ENCODE measurements at regions of chr12 and their contacts with region 1.

Region 1: DNA sequence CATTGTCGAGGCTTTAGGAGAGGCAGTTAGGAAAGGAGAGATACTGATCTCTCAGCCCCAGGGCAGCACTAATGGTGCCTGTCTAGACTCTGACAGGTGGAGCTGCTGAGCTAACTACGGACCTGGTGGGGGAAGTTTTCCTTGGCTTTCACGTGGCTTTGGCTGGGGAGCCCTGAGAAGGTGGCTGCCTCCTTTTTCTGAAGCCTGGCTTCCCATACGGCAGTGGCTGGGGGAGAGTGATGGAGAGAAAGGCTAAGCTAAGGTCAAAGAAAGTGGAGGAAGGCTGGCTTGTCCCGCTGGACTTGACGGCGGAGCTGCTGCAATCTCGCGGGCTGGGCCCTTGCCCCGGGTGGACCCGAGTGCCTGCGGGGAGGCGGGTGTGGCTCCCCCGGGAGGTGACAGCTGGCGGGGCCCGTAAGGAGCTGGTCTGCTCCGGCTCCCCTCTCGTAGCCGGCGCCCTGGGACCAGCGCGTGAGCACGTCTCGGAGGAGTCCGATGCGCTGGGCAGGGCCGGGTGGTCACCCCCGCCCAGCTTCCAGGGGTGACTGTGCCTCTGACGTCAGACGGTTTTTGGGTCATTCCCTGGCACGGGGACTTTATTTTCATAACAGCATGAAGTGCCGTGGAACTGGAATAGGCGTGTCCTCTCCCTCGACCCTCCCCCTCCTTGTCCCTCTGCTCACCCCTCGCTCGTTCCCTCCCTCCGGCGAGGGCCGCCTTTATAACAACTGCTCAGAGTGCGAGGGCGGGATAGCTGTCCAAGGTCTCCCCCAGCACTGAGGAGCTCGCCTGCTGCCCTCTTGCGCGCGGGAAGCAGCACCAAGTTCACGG is at the start of gene GPRC5A:
- DNase-seq: peak; percentile 95 to 98
- H3K4me3 ChIP-seq: peak within 1 kb of the TSS; percentile 56 to 67
- H3K27ac ChIP-seq: peak within 1 kb of the TSS; percentile 94 to 96
- H3K4me1 ChIP-seq: peaks cover 0 to 34% (median 9%) of the 10 kb centered on the region in 4 donors
- H3K27me3 ChIP-seq: no peaks in the 10 kb centered on the region
- CTCF ChIP-seq: peak; percentile 13 to 17

Region 2: DNA sequence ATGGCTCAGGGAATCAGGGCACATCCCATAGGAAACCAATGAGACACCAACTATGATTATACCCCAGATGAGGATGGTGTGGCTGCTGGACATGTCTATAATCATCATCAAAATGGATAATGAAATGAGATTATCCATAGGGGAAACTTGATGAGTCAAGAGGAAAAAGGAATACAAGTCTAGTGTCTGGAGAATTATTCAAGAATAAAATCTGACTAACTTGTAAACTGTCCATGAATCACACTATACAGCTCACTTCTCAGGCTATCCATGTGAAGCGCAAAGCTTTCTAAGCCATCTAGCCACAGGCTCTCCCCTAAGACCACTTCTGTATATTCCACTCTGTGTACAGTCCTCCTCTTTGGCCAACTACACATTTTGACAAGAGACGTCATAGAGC is 380.9 kb before region 1 on chr12:
- intact Hi-C with region 1: no loop called
- DNase-seq: no peak
- H3K4me3 ChIP-seq: no peak overlapping the region
- H3K27ac ChIP-seq: no peak overlapping the region
- H3K4me1 ChIP-seq: peaks cover 0 to 60% (median 31%) of the 10 kb centered on the region in 4 donors
- H3K27me3 ChIP-seq: no peaks in the 10 kb centered on the region
- CTCF ChIP-seq: no peak

Region 3: GRCh38 chr12:12724661-12725545 is 166.1 kb before region 1 on chr12:
- intact Hi-C with region 1: loop called (anchors 10 kb)
- DNase-seq: peak; percentile 98
- H3K4me3 ChIP-seq: peak overlapping the region; percentile 83 to 86
- H3K27ac ChIP-seq: peak overlapping the region; percentile 99 to 100
- H3K4me1 ChIP-seq: peaks cover 0 to 41% (median 20%) of the 10 kb centered on the region in 4 donors
- H3K27me3 ChIP-seq: no peaks in the 10 kb centered on the region
- CTCF ChIP-seq: peak in 1 of 2 experiments; percentile 19

Region 4: DNA sequence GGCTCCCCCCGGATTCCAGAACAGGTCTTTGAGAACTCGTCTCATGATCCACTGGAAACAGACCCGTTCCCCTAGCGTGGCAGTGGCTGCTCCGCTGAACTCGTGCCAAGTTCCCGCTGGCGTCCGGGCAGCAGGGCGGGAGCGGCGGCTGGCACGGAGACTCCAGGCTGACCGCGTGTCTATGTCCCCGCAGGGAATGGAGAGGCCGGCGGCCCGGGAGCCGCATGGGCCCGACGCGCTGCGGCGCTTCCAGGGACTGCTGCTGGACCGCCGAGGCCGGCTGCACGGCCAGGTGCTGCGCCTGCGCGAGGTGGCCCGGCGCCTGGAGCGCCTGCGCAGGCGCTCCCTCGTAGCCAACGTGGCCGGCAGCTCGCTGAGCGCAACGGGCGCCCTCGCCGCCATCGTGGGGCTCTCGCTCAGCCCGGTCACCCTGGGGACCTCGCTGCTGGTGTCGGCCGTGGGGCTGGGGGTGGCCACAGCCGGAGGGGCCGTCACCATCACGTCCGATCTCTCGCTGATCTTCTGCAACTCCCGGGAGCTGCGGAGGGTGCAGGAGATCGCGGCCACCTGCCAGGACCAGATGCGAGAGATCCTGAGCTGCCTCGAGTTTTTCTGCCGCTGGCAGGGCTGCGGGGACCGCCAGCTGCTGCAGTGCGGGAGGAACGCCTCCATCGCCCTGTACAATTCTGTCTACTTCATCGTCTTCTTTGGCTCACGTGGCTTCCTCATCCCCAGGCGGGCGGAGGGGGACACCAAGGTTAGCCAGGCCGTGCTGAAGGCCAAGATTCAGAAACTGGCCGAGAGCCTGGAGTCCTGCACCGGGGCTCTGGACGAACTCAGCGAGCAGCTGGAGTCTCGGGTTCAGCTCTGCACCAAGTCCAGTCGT is 104.1 kb before region 1 on chr12:
- intact Hi-C with region 1: loop called (anchors 5 kb)
- DNase-seq: peak; percentile 75 to 92
- H3K4me3 ChIP-seq: peak overlapping the region; percentile 63 to 64
- H3K27ac ChIP-seq: peak overlapping the region; percentile 80 to 91
- H3K4me1 ChIP-seq: peaks cover 0 to 48% (median 21%) of the 10 kb centered on the region in 4 donors
- H3K27me3 ChIP-seq: no peaks in the 10 kb centered on the region
- CTCF ChIP-seq: peak; percentile 12 to 52

Region 5: DNA sequence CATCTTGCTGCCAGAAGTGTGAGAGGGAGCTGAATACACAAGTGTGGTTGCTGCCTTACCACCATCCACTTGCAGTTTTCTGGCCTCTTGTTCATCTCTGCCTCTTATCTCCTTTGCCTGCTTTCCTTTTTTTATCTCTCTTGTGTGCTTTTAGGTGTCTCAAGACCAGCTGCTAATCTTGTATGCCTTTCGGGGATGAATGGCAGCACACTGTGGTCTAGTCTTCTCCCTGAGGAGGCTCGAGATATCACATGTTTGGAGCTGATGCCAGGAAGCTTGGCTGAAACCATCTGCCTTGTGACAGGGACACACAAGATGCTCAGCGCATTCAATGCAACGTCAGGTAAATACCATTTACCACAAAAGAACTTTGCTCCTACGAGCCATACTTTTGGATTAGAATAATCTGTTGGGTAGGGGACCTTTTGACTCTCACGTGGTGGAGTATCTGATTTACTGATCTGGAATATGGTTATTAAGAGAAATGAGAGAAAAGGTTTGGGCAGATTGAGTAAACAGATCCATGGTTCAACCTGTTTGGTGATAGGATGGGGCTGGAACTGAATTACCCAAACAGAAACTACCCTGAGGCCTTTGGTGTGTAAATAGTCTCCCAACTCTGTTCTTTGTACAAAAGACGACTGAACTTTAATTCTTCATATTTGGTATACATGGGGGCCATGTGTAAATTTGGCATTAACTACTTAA is 170.5 kb after region 1 on chr12:
- intact Hi-C with region 1: no loop called
- DNase-seq: no peak
- H3K4me3 ChIP-seq: no peak overlapping the region
- H3K27ac ChIP-seq: no peak overlapping the region
- H3K4me1 ChIP-seq: no peaks in the 10 kb centered on the region
- H3K27me3 ChIP-seq: no peaks in the 10 kb centered on the region
- CTCF ChIP-seq: no peak